Naive thymus-derived CD4-positive, alpha-beta T cell (primary cell): ENCODE measurements at regions of chr14 and their contacts with region 1.

Region 1: GRCh38 chr14:22505697-22506377 is 83.2 kb downstream of the DAD1 start:
- DNase-seq: no peak
- ATAC-seq: peak; percentile 39
- H3K4me3 ChIP-seq: peak overlapping the region; percentile 51
- H3K4me3 Mint-ChIP-seq: peak overlapping the region; percentile 79 to 95 (median 87)
- H3K27ac ChIP-seq: peak overlapping the region; percentile 90
- H3K27ac Mint-ChIP-seq: peak overlapping the region; percentile 92 to 99 (median 96)
- H3K4me1 ChIP-seq: peaks cover 30 to 40% of the 10 kb centered on the region in 2 donors
- H3K4me1 Mint-ChIP-seq: peaks cover 19 to 82% (median 64%) of the 10 kb centered on the region in 7 donors
- H3K27me3 ChIP-seq: no peaks in the 10 kb centered on the region
- H3K27me3 Mint-ChIP-seq: no peaks in the 10 kb centered on the region

Region 2: DNA sequence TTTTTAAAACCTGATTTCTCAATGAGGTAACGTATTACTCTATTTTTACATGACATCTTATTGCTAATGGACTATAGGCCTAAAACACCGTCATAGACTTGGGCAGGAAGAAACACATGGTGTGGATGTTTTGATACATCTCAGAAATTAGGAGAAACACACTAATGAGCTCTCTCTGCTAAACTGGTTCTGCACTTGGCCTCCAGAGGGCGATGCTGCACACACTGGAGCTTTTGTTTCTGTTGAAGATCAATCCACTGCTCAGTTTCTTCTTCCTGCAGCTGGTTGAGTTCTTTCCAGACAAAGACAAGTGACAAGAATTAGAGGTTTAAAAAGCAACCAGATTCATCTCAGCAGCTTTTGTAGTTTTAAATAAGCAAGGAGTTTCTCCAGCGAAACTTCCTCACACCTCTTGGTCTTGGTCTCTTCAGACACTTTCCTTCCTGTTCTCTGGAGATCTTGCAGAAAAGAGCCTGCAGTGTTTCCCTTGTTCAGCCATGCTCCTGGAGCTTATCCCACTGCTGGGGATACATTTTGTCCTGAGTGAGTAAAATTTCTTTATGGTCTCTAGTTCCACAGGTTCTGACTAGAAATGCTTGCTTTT is 653.7 kb before region 1 on chr14:
- CTCF ChIA-PET with region 1: interaction called, 4 read pairs
- POLR2A ChIA-PET with region 1: interaction called, 7 read pairs
- intact Hi-C with region 1: loop called in 1 of 2 experiments (anchors 5 kb)
- DNase-seq: peak; percentile 36 to 78 (median 66)
- ATAC-seq: peak; percentile 90
- H3K4me3 ChIP-seq: peak overlapping the region; percentile 45
- H3K4me3 Mint-ChIP-seq: peak overlapping the region; percentile 61 to 88 (median 81)
- H3K27ac ChIP-seq: peak overlapping the region; percentile 32
- H3K27ac Mint-ChIP-seq: peak overlapping the region; percentile 29 to 90 (median 80)
- H3K4me1 ChIP-seq: no peaks in the 10 kb centered on the region
- H3K4me1 Mint-ChIP-seq: peaks cover 4 to 17% (median 14%) of the 10 kb centered on the region in 7 donors
- H3K27me3 ChIP-seq: no peaks in the 10 kb centered on the region
- H3K27me3 Mint-ChIP-seq: peaks cover 0 to 28% (median 6%) of the 10 kb centered on the region in 5 donors

Region 3: GRCh38 chr14:22122227-22122818 is 383.5 kb before region 1 on chr14:
- CTCF ChIA-PET with region 1: no interaction called
- POLR2A ChIA-PET with region 1: interaction called, 7 read pairs
- intact Hi-C with region 1: loop called in 1 of 2 experiments (anchors 5 kb)
- DNase-seq: peak in 3 of 9 donors; percentile 26 to 46 (median 37)
- ATAC-seq: no peak
- H3K4me3 ChIP-seq: peak overlapping the region; percentile 20
- H3K4me3 Mint-ChIP-seq: peak overlapping the region; percentile 72 to 95 (median 85)
- H3K27ac ChIP-seq: peak overlapping the region; percentile 71
- H3K27ac Mint-ChIP-seq: peak overlapping the region in 8 of 9 donors; percentile 84 to 95 (median 91)
- H3K4me1 ChIP-seq: no peaks in the 10 kb centered on the region
- H3K4me1 Mint-ChIP-seq: peaks cover 0 to 30% (median 18%) of the 10 kb centered on the region in 7 donors
- H3K27me3 ChIP-seq: no peaks in the 10 kb centered on the region
- H3K27me3 Mint-ChIP-seq: peaks cover 0 to 7% (median 0%) of the 10 kb centered on the region in 5 donors

Region 4: DNA sequence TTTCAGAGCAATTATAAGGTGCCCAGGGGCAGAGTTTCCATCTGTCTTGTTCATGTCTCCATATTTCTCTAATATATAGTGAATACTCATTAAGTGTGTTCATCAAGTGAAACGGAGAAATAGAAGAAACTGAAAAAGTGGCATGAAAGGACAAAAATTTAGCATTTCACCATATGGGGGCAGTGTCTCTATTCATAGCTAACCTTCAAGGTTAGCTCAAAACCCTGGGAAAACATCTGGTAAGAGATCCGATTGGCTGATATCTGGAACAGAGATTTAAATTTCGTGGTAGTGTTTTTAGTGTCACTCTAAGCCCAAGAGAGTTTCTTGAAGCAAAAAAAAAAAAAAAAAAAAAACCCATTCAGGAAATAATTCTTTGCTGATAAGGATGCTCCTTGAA is 284.3 kb before region 1 on chr14:
- CTCF ChIA-PET with region 1: interaction called, 4 read pairs
- POLR2A ChIA-PET with region 1: no interaction called
- intact Hi-C with region 1: loop called in 1 of 2 experiments (anchors 5 kb)
- DNase-seq: peak in 5 of 9 donors; percentile 5 to 29 (median 20)
- ATAC-seq: no peak
- H3K4me3 ChIP-seq: no peak overlapping the region
- H3K4me3 Mint-ChIP-seq: peak overlapping the region; percentile 25 to 73 (median 52)
- H3K27ac ChIP-seq: no peak overlapping the region
- H3K27ac Mint-ChIP-seq: peak overlapping the region in 6 of 9 donors; percentile 4 to 72 (median 52)
- H3K4me1 ChIP-seq: no peaks in the 10 kb centered on the region
- H3K4me1 Mint-ChIP-seq: peaks cover 0 to 13% (median 7%) of the 10 kb centered on the region in 7 donors
- H3K27me3 ChIP-seq: no peaks in the 10 kb centered on the region
- H3K27me3 Mint-ChIP-seq: no peaks in the 10 kb centered on the region

Region 5: DNA sequence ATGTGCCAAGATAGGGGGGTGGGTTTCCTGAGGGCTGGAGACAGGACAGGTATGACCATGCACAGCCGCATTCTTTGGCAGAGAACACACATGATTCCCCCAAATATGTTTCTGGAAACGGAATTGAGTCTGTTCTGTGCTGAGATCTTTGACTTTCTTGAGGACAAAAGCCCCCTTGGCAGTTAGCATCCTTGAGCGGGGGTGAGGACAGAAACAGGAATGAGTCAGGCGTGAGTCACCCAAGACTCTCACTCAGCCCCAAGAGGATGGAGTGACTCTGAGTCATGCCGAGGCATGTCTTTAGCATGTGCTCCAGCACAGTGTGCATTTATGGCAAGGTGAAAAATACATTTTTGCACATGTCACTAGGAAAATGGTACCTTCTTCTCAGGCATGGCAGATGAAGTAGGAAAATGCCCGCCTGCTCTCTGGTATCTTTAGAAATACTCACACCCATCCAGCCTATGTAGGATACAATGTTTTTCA is 31.1 kb after region 1 on chr14:
- CTCF ChIA-PET with region 1: interaction called, 7 read pairs
- POLR2A ChIA-PET with region 1: interaction called, 554 read pairs
- intact Hi-C with region 1: no loop called
- DNase-seq: peak in 2 of 9 donors; percentile 75 to 90
- ATAC-seq: peak; percentile 88
- H3K4me3 ChIP-seq: peak overlapping the region; percentile 46
- H3K4me3 Mint-ChIP-seq: peak overlapping the region; percentile 79 to 93 (median 87)
- H3K27ac ChIP-seq: peak overlapping the region; percentile 90
- H3K27ac Mint-ChIP-seq: peak overlapping the region; percentile 92 to 99 (median 94)
- H3K4me1 ChIP-seq: peaks cover 94 to 97% of the 10 kb centered on the region in 2 donors
- H3K4me1 Mint-ChIP-seq: peaks cover 61 to 100% (median 97%) of the 10 kb centered on the region in 7 donors
- H3K27me3 ChIP-seq: no peaks in the 10 kb centered on the region
- H3K27me3 Mint-ChIP-seq: no peaks in the 10 kb centered on the region